GM10248 (cell line): ENCODE measurements at regions of chr14 and their contacts with region 1.

Region 1: DNA sequence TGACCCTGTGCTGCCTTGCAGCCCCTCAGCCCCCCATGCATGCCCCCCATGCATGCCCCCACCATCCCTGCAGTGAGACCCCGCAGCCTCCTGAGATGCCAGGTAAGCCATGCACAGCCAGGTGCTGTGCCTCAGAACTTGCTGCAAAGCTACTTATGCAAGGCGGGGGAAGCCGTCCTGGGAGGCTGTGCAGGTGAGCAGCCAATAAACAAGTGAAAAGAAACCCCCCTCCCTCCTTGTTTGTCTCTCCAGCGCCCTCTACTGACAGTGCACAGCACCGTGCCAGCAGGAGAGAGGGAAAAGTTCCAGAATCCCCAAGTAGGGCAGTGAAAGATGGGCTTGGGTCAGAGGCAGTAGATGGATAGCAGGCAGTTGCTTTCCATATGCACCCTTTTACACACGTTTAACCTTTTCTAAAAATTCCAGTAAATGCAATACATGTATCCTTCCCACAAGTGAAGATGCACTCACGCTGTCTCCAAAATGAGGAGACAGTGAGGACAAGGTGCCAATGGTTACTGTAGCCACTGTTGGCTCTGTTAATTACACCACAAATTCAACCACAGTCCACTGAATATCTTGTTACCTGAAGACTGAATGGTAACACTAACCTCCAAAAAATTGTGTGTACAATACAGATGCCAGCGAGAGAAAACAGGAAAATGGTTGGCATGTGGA is 18.0 kb downstream of the TNFAIP2 start:
- DNase-seq: peak; percentile 74
- CTCF ChIP-seq: peak; percentile 79

Region 2: DNA sequence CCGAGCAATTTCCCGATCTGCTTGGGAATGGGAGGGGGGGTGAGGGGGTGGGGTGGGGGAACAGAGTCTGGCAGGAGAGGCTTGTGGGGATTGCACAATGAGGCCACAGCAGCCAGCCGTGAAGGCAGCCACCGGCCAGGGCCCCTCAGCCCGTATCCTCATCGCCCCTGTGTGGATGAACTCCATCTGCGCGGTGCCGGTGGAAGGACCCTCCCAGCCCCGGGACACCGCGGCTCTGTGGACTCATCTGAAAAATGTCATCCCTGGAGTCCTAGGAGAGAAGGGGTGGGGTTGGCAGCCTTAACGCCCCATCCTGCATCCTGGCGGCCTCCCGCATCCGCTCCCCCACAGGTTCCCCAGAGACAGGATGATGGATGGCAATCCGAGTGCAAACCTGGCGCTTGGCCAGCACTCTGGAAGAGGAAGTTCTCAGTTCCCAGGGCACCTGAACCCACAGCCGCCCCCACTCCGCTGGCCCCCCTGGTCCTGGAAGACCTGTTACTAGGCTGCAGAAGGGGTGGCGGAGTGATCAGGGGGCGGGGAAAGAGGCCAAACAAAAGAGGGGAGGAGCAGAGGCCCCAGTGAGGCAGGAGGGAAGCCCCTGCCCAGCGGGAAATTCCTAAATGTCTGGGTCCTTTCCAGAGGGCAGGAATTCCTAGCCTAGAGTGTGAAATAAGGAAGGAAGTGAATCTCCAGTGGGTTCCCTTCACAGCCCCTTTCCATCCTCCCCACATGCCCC is 19.2 kb before region 1 on chr14:
- CTCF ChIA-PET with region 1: interaction called, 15 read pairs
- POLR2A ChIA-PET with region 1: no interaction called
- DNase-seq: no peak
- CTCF ChIP-seq: no peak

Region 3: DNA sequence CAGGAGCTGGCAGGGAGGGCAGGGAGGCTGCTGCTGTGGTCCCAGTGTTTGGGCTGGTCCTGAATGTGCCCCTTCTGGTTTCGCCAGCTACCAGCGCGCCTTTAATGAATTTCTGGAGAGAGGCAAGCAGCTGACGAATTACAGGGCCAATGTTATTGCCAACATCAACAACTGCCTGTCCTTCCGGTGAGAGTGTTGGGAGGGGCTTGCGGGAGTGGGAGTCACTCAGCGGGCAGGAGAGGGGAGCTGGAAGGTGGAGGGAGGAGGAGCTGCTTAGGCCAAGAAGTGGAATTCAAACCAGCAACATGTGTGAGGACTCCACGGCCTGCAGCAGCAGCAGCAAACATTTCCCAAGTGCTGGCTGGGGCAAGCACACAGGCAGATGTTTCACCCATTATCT is 10.3 kb before region 1 on chr14:
- CTCF ChIA-PET with region 1: interaction called, 22 read pairs
- POLR2A ChIA-PET with region 1: no interaction called
- DNase-seq: no peak
- CTCF ChIP-seq: no peak

Region 4: GRCh38 chr14:103180331-103180730 is 39.1 kb after region 1 on chr14:
- CTCF ChIA-PET with region 1: no interaction called
- POLR2A ChIA-PET with region 1: no interaction called
- DNase-seq: no peak
- CTCF ChIP-seq: no peak